GM12878 (cell line): ENCODE measurements at regions of chr2 and their contacts with region 1.

Region 1: GRCh38 chr2:207238831-207239701 is 73.3 kb upstream of the KLF7 start:
- DNase-seq: no peak
- ATAC-seq: no peak
- H3K4me3 ChIP-seq: no peak overlapping the region
- H3K27ac ChIP-seq: no peak overlapping the region
- H3K4me1 ChIP-seq: peaks cover 10% of the 10 kb centered on the region
- H3K27me3 ChIP-seq: no peaks in the 10 kb centered on the region
- CTCF ChIP-seq: no peak
- EP300 ChIP-seq: no peak
- POLR2A ChIP-seq: no peak
- RAD21 ChIP-seq: no peak

Region 2: GRCh38 chr2:206713746-206714145 is 525.3 kb before region 1 on chr2:
- CTCF ChIA-PET with region 1: no interaction called
- POLR2A ChIA-PET with region 1: no interaction called
- RAD21 ChIA-PET with region 1: no interaction called
- SMC1A ChIA-PET with region 1: no interaction called
- in situ Hi-C with region 1: no loop called
- intact Hi-C with region 1: no loop called
- DNase-seq: peak; percentile 27
- ATAC-seq: peak; percentile 84
- H3K4me3 ChIP-seq: no peak overlapping the region
- H3K27ac ChIP-seq: peak overlapping the region; percentile 22
- H3K4me1 ChIP-seq: peaks cover 15% of the 10 kb centered on the region
- H3K27me3 ChIP-seq: no peaks in the 10 kb centered on the region
- CTCF ChIP-seq: no peak
- EP300 ChIP-seq: no peak
- POLR2A ChIP-seq: no peak
- RAD21 ChIP-seq: no peak

Region 3: DNA sequence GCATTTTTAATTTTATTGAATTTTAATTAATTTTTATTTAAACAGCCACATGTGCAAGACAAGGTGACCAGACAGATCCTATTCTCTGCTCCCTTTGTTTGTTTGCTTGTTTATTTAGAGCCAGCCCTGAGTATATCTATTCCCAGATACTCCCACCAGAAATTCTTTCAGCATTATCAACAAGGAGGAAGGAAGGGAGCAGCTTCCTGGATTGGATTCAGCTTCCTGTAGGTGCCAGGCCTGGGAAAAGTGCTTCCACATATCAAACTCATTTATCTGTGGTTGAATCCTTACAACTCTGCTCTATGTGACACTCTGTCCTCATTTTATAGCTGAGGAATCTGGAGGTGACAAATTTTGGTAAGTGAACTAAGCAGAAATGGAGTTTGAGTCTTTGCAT is 12.8 kb before region 1 on chr2:
- CTCF ChIA-PET with region 1: interaction called, 4 read pairs
- POLR2A ChIA-PET with region 1: no interaction called
- RAD21 ChIA-PET with region 1: no interaction called
- SMC1A ChIA-PET with region 1: interaction called, 12 read pairs
- in situ Hi-C with region 1: no loop called
- intact Hi-C with region 1: no loop called
- DNase-seq: no peak
- ATAC-seq: no peak
- H3K4me3 ChIP-seq: no peak overlapping the region
- H3K27ac ChIP-seq: no peak overlapping the region
- H3K4me1 ChIP-seq: peaks cover 17% of the 10 kb centered on the region
- H3K27me3 ChIP-seq: no peaks in the 10 kb centered on the region
- CTCF ChIP-seq: no peak
- EP300 ChIP-seq: no peak
- POLR2A ChIP-seq: no peak
- RAD21 ChIP-seq: no peak

Region 4: DNA sequence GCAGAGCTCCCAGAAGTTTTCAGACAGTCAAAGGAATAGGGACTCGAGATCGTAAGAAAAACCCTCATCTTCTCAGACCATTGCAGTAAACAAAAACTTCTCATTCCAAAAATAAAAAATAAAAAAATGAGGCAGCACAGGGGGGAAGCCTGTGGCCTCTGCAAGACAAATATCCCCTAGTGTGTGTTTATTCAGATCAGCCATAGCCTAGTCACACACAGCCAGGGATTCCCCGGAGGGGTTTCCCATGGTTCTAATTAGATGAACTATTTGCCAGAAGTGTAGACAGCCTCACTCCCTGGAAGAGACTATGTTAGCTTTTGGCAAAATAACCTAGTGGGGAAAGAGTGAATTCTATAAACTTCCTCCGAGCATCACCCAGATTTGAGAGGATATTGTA is 49.6 kb after region 1 on chr2:
- CTCF ChIA-PET with region 1: no interaction called
- POLR2A ChIA-PET with region 1: no interaction called
- RAD21 ChIA-PET with region 1: interaction called, 12 read pairs
- SMC1A ChIA-PET with region 1: interaction called, 5 read pairs
- in situ Hi-C with region 1: no loop called
- intact Hi-C with region 1: no loop called
- DNase-seq: peak; percentile 59
- ATAC-seq: peak; percentile 89
- H3K4me3 ChIP-seq: no peak overlapping the region
- H3K27ac ChIP-seq: no peak overlapping the region
- H3K4me1 ChIP-seq: peaks cover 46% of the 10 kb centered on the region
- H3K27me3 ChIP-seq: no peaks in the 10 kb centered on the region
- CTCF ChIP-seq: no peak
- EP300 ChIP-seq: peak; percentile 41 to 44; a peak in 2 of 4 replicates
- POLR2A ChIP-seq: no peak
- RAD21 ChIP-seq: no peak

Region 5: DNA sequence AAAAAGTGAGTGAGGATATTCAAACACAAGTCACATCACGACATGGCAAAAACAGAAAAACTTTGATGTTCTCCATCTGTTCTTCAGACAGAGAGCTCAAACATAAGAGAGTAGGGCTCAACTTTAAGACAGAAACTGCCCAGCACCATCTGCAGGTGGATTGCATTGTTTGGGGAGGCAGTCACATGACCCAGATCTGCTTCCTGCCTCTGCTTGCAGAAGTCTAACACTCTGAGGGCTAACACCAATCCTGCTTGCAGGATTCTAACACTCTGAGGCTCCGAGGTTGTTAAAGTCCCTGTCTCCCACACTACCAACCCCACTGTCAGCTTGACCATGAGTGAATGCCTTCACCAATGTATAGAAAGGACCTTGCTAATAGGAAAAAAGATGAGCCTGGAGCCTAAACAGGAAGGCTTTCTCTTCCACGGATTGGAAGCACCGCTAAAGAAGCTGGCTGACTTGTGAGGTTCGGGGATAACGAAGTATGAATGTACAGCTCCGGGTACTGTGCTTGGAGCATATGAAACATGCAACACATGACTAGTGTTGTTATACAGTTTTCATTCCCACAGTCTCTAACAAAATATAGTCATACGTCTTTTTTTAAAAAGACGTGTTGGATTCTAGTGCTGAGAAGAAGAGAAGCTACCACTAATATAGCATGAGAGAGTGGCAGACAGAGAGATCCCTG is 114.1 kb after region 1 on chr2:
- CTCF ChIA-PET with region 1: interaction called, 3 read pairs
- POLR2A ChIA-PET with region 1: no interaction called
- RAD21 ChIA-PET with region 1: no interaction called
- SMC1A ChIA-PET with region 1: interaction called, 10 read pairs
- in situ Hi-C with region 1: no loop called
- intact Hi-C with region 1: no loop called
- DNase-seq: no peak
- ATAC-seq: peak; percentile 90
- H3K4me3 ChIP-seq: no peak overlapping the region
- H3K27ac ChIP-seq: no peak overlapping the region
- H3K4me1 ChIP-seq: peaks cover 7% of the 10 kb centered on the region; the same call in 1 of the 2 replicates
- H3K27me3 ChIP-seq: no peaks in the 10 kb centered on the region
- CTCF ChIP-seq: peak in 1 of 3 experiments; percentile 45; a peak in 1 of 6 replicates
- EP300 ChIP-seq: no peak
- POLR2A ChIP-seq: no peak
- RAD21 ChIP-seq: peak; percentile 55